Ascending aorta (tissue), 2 donors: ENCODE measurements at regions of chr10 and their contacts with region 1.

Region 1: GRCh38 chr10:87861953-87862678 is 1.2 kb downstream of the KLLN start:
- DNase-seq: peak; percentile 84 to 98
- H3K4me3 ChIP-seq: peak overlapping the region; percentile 100
- H3K27ac ChIP-seq: peak overlapping the region; percentile 92 to 100
- H3K4me1 ChIP-seq: peaks cover 0 to 7% of the 10 kb centered on the region in 2 donors
- H3K27me3 ChIP-seq: no peaks in the 10 kb centered on the region
- CTCF ChIP-seq: no peak

Region 2: DNA sequence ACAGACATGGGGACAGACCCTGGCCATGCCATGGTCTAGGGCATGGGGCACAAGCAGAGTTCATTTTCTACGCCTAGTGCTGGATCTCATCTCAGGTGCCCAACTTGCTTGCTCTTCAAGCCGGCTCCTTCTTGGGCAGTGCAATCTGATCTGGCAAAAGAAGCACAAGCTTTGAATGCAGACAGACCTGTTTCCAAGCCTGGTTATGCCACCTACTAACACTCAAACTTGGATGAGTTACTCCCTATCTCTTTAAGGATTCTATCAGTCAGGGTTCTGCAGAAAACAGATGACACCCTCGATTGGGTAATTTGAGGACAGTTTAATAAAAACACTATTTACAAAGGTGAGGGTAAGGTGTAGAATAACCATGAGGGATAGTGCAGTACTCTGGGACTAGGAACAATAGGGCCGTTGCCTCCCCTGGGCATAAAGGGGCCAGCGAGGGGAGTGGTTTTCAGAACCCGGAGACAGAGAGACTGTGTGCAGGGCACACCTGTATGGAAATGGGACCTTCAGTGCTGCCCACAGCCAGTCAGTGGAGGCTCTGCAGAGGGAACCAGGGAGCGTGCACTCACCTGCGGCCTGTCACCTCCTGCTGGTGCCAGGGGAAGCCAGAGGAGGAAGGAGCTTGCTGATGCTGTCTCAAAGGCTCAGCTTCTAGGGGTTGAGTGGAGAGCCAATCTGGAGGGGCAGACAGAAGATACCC is 1305.4 kb before region 1 on chr10:
- intact Hi-C with region 1: no loop called
- DNase-seq: no peak
- H3K4me3 ChIP-seq: no peak overlapping the region
- H3K27ac ChIP-seq: no peak overlapping the region
- H3K4me1 ChIP-seq: no peaks in the 10 kb centered on the region
- H3K27me3 ChIP-seq: no peaks in the 10 kb centered on the region
- CTCF ChIP-seq: no peak

Region 3: DNA sequence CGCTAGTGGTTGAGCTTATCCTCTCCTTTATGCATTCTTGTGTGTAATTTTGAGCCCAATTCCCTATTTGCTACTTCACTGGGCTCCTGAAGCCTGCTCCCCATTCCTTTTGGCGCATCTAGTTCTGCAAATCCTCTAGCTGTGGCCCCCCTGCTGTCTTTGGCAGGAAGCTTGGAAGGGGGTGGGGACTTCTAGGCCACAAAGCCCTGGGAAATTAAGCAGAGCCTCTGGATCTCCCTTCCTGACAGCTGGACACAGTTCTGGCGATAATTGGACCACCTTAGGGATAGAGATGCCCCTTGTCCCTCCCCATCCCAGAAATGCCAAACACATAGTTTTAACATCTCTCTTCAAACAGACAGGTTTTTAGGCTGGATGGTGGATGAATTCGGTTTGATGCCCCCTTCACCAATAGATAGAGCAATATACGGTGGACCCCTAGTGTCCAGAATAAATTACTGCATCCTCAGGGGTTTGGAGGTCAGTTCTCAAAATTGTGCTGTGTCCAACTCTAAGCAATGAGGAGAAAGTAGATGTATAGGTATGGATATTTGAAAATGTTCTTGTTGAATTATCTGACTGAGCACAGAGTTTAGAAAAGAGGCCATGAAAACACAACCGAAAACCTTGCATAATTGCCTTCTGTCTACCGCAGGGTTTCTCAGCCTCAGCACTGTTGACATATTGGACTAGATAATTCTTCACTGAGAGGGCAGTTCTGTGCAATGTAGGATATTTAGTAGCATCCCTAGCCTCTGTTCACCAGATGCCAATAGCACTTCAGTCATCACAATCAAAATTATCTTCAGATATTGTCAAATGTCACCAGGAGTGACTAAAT is 126.9 kb before region 1 on chr10:
- intact Hi-C with region 1: no loop called
- DNase-seq: no peak
- H3K4me3 ChIP-seq: peak overlapping the region in 1 of 2 donors; percentile 23
- H3K27ac ChIP-seq: no peak overlapping the region
- H3K4me1 ChIP-seq: peaks cover 0 to 4% of the 10 kb centered on the region in 2 donors
- H3K27me3 ChIP-seq: no peaks in the 10 kb centered on the region
- CTCF ChIP-seq: peak; percentile 54 to 85 (median 82)

Region 4: GRCh38 chr10:87931836-87932230 is 69.7 kb after region 1 on chr10:
- intact Hi-C with region 1: loop called (anchors 5 kb)
- DNase-seq: no peak
- H3K4me3 ChIP-seq: no peak overlapping the region
- H3K27ac ChIP-seq: peak overlapping the region; percentile 44 to 46
- H3K4me1 ChIP-seq: peaks cover 10 to 37% of the 10 kb centered on the region in 2 donors
- H3K27me3 ChIP-seq: no peaks in the 10 kb centered on the region
- CTCF ChIP-seq: no peak

Region 5: GRCh38 chr10:88042160-88043100 is 180.3 kb after region 1 on chr10:
- intact Hi-C with region 1: loop called (anchors 2 kb)
- DNase-seq: peak in 1 of 2 donors; percentile 78
- H3K4me3 ChIP-seq: peak overlapping the region in 1 of 2 donors; percentile 32
- H3K27ac ChIP-seq: peak overlapping the region; percentile 90
- H3K4me1 ChIP-seq: peaks cover 7 to 62% of the 10 kb centered on the region in 2 donors
- H3K27me3 ChIP-seq: no peaks in the 10 kb centered on the region
- CTCF ChIP-seq: no peak

Region 6: GRCh38 chr10:88114368-88114767 is 252.3 kb after region 1 on chr10:
- intact Hi-C with region 1: loop called (anchors 2 kb)
- DNase-seq: no peak
- H3K4me3 ChIP-seq: no peak overlapping the region
- H3K27ac ChIP-seq: no peak overlapping the region
- H3K4me1 ChIP-seq: peaks cover 4 to 11% of the 10 kb centered on the region in 2 donors
- H3K27me3 ChIP-seq: no peaks in the 10 kb centered on the region
- CTCF ChIP-seq: peak; percentile 15 to 55 (median 46)

Region 7: DNA sequence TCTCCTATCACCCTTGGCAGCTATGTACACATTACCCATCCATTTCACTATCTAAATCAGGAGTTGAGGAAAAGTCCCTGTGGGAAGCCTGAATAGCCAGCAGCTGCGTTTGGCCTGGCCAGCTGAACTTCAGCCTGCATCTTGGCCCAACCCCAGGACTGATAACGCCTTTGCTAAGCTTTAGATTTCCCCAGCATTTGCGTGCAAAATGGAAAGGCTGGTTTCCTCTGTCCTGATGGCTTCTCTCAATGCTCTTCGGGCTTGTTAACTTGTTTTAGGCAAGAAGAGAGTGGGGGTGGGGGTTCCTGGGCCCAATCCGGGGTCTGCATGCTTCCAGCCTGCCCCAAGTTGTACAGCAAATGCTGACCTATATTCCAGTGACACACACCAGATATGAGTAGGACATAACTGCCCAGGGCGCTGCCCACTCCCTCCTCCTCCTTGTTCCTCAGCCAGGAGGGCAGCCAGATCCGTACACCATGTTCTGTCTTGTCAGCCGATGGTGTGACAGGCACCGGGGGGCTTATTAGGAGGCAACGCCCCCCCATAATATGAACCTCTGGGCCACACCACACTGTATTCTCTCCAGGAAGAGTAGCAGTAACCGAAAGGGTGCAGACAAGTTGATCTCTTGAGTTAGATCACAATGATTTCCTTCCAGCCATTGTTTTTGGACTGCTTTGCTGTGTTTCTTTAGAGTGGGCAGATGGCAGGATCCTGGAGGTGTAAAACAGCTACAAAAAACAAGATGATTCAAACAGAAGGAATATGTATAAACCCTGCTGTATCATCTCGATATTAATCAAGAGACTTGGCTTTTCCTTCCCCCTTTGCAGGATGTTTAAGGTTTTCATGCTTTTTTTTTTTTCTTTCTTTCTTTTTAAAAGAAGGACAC is 382.0 kb after region 1 on chr10:
- intact Hi-C with region 1: loop called (anchors 5 kb)
- DNase-seq: peak in 1 of 2 donors; percentile 70
- H3K4me3 ChIP-seq: peak overlapping the region; percentile 29 to 31
- H3K27ac ChIP-seq: peak overlapping the region; percentile 58 to 68
- H3K4me1 ChIP-seq: peaks cover 5 to 32% of the 10 kb centered on the region in 2 donors
- H3K27me3 ChIP-seq: no peaks in the 10 kb centered on the region
- CTCF ChIP-seq: no peak